Ovary (tissue), 10 donors: ENCODE measurements at regions of chr2 and their contacts with region 1.

Region 1: GRCh38 chr2:52558265-52558664 is 1209.3 kb upstream of the CHAC2 start:
- DNase-seq: no peak
- H3K4me3 ChIP-seq: no peak overlapping the region
- H3K27ac ChIP-seq: no peak overlapping the region
- H3K4me1 ChIP-seq: no peaks in the 10 kb centered on the region
- H3K27me3 ChIP-seq: no peaks in the 10 kb centered on the region
- CTCF ChIP-seq: no peak
- EP300 ChIP-seq: no peak
- POLR2A ChIP-seq: no peak

Region 2: GRCh38 chr2:52518678-52519077 is 39.6 kb before region 1 on chr2:
- intact Hi-C with region 1: loop called in 1 of 4 experiments (anchors 1 kb)
- DNase-seq: no peak
- H3K4me3 ChIP-seq: no peak overlapping the region
- H3K27ac ChIP-seq: no peak overlapping the region
- H3K4me1 ChIP-seq: no peaks in the 10 kb centered on the region
- H3K27me3 ChIP-seq: no peaks in the 10 kb centered on the region
- CTCF ChIP-seq: no peak
- EP300 ChIP-seq: no peak
- POLR2A ChIP-seq: no peak